Activated CD4-positive, alpha-beta memory T cell treated with anti-CD3 and anti-CD28 coated beads for 36 hours (primary cell): ENCODE measurements at regions of chr22 and their contacts with region 1.

Region 1: DNA sequence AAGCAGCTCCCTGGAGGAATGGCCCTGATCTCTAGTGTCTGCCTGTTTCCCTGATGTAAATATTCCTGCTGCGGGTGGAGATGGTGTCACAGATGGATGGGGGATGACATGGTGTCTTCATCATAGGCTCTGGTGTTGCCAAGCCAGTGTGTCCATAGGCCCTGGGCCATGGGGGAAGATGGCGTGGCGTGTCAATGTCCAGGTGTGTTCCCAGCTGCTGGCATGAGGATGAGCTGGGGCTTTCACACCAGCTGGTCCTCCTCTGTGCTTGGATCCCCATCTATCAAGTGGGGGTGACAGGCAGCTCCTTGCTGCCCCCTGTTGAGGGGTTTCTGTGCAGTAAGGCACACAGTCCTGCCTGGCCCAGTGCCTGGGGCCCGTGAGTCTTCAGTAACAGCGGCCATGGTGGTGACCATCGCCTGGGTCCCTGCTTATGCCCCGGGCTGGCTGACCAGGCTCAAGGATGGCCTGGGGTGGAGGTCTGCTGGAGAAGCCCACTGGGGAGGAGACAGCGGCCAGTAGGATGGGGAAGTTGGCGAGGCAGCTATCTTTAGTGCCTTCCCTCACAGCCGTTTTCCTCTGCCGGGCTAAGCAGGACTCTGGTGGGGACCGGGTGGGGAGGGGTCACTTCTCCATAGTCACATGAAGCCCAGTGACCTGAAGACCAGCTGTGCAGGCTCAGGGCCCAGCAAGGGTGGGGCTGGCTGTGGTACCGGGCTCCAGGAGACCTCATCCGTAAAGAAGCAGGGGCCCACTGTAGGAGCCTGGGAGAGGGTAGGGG is 12.7 kb downstream of the RPL3 start:
- DNase-seq: peak; percentile 75
- H3K4me3 Mint-ChIP-seq: no peak overlapping the region
- H3K27ac Mint-ChIP-seq: no peak overlapping the region
- H3K4me1 Mint-ChIP-seq: peaks cover 3% of the 10 kb centered on the region
- H3K27me3 Mint-ChIP-seq: no peaks in the 10 kb centered on the region

Region 2: GRCh38 chr22:39170825-39171622 is 135.7 kb before region 1 on chr22:
- CTCF ChIA-PET with region 1: interaction called, 113 read pairs
- POLR2A ChIA-PET with region 1: interaction called, 7 read pairs
- intact Hi-C with region 1: loop called (anchors 1 kb)
- DNase-seq: peak; percentile 91
- H3K4me3 Mint-ChIP-seq: peak overlapping the region; percentile 37
- H3K27ac Mint-ChIP-seq: peak overlapping the region; percentile 43
- H3K4me1 Mint-ChIP-seq: peaks cover 40% of the 10 kb centered on the region
- H3K27me3 Mint-ChIP-seq: peaks cover 1% of the 10 kb centered on the region

Region 3: DNA sequence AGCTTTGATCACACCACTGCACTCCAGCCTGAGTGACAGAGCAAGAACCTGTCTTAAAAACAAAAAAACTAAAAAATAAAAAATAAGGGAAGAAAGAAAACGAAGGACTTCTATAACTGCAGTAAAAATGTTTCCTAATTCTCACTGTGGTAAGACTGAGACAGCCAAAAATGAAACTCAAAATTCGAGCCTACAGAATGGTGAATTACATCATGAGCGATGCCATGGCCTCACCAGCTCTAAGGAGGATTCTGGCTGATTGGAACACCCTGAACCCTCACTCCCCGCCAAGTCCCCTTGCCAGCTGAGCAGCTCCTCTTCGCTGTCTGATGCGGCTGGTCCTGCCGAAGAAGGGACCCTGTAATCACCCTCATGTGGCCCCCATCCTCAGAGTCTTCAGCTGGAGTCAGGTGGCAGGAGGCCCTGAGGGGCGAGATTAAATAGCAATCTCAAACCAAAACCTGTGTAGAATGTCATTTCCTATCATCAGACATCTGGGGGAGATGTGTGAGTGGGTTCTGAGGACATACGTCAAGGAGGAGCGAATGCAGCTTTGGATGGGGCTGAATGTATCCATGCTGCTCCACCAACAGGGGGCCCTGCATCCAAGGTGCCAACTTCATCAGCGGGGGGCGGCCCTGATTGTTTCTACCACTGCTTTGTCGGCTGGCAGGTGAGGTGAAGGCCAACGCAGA is 91.2 kb before region 1 on chr22:
- CTCF ChIA-PET with region 1: interaction called, 18 read pairs
- POLR2A ChIA-PET with region 1: no interaction called
- intact Hi-C with region 1: no loop called
- DNase-seq: peak; percentile 51
- H3K4me3 Mint-ChIP-seq: no peak overlapping the region
- H3K27ac Mint-ChIP-seq: no peak overlapping the region
- H3K4me1 Mint-ChIP-seq: peaks cover 3% of the 10 kb centered on the region
- H3K27me3 Mint-ChIP-seq: peaks cover 11% of the 10 kb centered on the region

Region 4: DNA sequence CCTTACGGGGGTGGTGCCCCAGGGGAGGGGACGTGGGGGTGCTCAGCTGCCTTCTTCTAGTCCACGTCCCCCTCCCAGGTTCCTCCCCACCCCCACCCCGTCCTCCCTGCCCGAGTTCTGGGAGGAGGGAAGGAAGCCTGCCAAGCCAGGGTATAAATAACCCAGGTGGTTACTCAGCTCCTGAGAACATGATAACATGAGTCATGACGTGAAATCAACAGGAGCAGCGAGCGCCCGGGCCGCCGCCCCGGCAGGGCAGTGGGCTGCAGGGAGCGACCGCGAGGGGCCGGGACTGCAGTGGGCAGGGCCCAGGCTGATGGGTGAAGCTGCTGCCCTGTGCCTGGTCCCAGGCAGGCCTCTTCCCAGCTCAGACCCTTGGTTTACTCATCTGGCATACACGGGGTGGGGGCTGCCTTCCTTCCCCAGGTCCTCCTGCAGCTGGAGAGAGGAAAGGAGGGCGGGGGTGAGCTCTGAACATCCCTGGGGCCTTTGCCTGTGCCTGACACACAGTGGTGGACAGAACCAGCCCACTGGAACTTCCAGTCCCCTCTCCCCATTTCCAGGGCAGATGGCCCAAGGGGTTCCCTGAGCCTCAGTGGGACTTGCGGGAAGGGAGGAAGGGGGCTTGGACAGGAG is 53.2 kb before region 1 on chr22:
- CTCF ChIA-PET with region 1: interaction called, 15 read pairs
- POLR2A ChIA-PET with region 1: no interaction called
- intact Hi-C with region 1: no loop called
- DNase-seq: peak; percentile 74
- H3K4me3 Mint-ChIP-seq: no peak overlapping the region
- H3K27ac Mint-ChIP-seq: no peak overlapping the region
- H3K4me1 Mint-ChIP-seq: peaks cover 29% of the 10 kb centered on the region
- H3K27me3 Mint-ChIP-seq: peaks cover 4% of the 10 kb centered on the region

Region 5: GRCh38 chr22:39349506-39349966 is 42.8 kb after region 1 on chr22:
- CTCF ChIA-PET with region 1: no interaction called
- POLR2A ChIA-PET with region 1: no interaction called
- intact Hi-C with region 1: no loop called
- DNase-seq: peak; percentile 16
- H3K4me3 Mint-ChIP-seq: peak overlapping the region; percentile 48
- H3K27ac Mint-ChIP-seq: no peak overlapping the region
- H3K4me1 Mint-ChIP-seq: peaks cover 10% of the 10 kb centered on the region
- H3K27me3 Mint-ChIP-seq: peaks cover 23% of the 10 kb centered on the region

Region 6: GRCh38 chr22:39360674-39361413 is 54.1 kb after region 1 on chr22:
- CTCF ChIA-PET with region 1: no interaction called
- POLR2A ChIA-PET with region 1: no interaction called
- intact Hi-C with region 1: no loop called
- DNase-seq: no peak
- H3K4me3 Mint-ChIP-seq: no peak overlapping the region
- H3K27ac Mint-ChIP-seq: no peak overlapping the region
- H3K4me1 Mint-ChIP-seq: no peaks in the 10 kb centered on the region
- H3K27me3 Mint-ChIP-seq: no peaks in the 10 kb centered on the region

Region 7: GRCh38 chr22:39559454-39560105 is 252.8 kb after region 1 on chr22:
- CTCF ChIA-PET with region 1: no interaction called
- POLR2A ChIA-PET with region 1: no interaction called
- intact Hi-C with region 1: no loop called
- DNase-seq: no peak
- H3K4me3 Mint-ChIP-seq: no peak overlapping the region
- H3K27ac Mint-ChIP-seq: no peak overlapping the region
- H3K4me1 Mint-ChIP-seq: peaks cover 7% of the 10 kb centered on the region
- H3K27me3 Mint-ChIP-seq: peaks cover 20% of the 10 kb centered on the region